ENCODE measurements at regions of chr2 and their contacts with region 1.

Region 1: DNA sequence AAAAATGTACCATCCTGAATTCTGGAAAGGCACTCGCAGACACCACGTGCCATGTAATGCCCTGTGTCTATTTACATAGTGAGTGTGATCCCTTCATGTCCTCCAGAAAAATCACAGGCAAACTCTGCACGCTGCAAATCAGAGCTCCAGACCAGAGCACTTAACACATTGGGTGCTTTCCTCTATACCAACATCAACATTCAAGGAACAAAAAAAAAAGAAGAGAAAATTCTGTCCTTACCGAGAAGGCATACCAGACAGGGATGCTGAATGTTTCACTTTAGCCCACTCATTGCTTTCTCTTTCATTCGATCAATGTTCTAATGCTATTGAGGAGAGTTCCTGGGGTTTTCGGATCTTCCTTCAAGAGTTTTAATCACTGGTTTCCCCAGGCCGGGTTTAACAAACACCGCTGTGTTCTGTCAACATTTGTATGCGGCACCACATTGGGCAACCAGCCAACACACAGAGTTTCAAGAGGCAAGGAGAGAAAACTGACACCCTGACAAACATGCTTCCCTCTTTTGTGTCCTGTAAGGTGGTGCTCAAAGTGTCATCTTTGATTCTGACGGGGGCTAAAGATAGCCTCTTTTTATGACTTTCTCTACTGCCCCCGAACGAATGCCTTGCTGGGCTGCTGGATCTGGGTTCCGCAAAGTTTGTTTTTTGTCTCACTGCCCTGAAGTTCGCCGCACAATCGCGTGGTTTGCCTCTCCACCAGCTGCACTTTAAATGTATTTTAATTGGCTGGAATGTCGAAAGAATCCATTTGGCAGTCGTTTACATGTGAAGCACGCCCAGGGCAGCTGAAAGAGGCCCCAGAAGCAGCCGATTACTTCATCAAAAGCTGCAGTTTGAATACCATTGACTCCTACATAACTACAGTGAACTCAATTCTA is 106.4 kb upstream of the NCKAP5 start:
- DNase-seq: peak; percentile 67
- H3K4me3 ChIP-seq: peak overlapping the region; percentile 32
- H3K27me3 ChIP-seq: no peaks in the 10 kb centered on the region
- CTCF ChIP-seq: no peak

Region 2: DNA sequence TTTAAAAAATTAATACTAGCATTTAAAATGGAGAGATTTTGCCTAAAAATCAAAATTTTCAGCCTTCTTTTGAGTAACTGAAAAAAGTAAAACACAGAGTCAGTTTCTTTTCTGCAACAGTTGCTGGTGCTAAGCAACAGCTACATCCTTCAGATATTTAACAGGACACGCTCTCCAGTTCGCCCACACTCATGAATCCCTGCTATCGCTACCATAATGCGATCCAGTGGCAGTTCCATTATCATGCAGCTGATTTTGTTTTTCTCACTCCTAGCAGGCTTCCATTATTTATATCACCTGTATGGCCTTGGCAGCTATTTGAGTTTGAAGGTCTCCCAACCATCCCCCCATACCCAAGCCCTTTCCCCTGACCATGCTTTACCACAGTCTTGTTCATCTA is 13.3 kb before region 1 on chr2:
- CTCF ChIA-PET with region 1: no interaction called
- POLR2A ChIA-PET with region 1: no interaction called
- DNase-seq: no peak
- H3K4me3 ChIP-seq: no peak overlapping the region
- H3K27me3 ChIP-seq: no peaks in the 10 kb centered on the region
- CTCF ChIP-seq: no peak

Region 3: DNA sequence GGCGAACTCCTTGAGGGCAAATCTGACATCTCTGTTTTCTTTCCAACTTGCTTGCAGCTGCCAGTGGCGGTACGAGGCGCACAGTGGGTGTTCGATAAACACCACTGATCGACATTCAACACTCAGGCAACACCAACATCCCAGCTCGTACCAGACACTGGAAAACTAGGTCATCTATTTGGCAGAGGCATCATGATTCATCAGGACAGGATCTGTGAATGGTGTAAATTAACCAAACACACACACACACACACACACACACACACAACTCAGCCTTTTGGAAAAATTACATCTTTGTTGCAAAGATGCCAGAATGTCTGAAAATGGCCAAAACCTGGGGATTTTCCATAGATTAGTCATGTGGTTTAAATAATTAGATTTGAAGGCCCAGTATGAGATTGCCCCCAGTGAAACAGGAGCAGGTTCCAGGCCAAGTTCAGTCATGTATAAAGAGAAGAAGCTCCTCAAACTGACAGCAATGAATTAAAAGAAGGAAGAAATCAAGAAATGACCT is 44.1 kb after region 1 on chr2:
- CTCF ChIA-PET with region 1: no interaction called
- POLR2A ChIA-PET with region 1: interaction called, 13 read pairs
- DNase-seq: peak; percentile 66
- H3K4me3 ChIP-seq: no peak overlapping the region
- H3K27me3 ChIP-seq: no peaks in the 10 kb centered on the region
- CTCF ChIP-seq: no peak

Region 4: GRCh38 chr2:133829450-133830065 is 154.9 kb after region 1 on chr2:
- CTCF ChIA-PET with region 1: no interaction called
- POLR2A ChIA-PET with region 1: interaction called, 10 read pairs
- DNase-seq: no peak
- H3K4me3 ChIP-seq: no peak overlapping the region
- H3K27me3 ChIP-seq: no peaks in the 10 kb centered on the region
- CTCF ChIP-seq: no peak

Measured in BJ (cell line).